H1 (cell line): ENCODE measurements at regions of chr5 and their contacts with region 1.

Region 1: GRCh38 chr5:14108170-14108996 is 34.8 kb upstream of the TRIO start:
- DNase-seq: peak; percentile 62 to 65
- H3K4me3 ChIP-seq: peak overlapping the region; percentile 18 to 53 (median 37); a peak in 7 of 8 replicates
- H3K27ac ChIP-seq: no peak overlapping the region
- H3K4me1 ChIP-seq: peaks cover 0 to 3% (median 1%) of the 10 kb centered on the region in 4 experiments; a peak in 3 of 7 replicates
- H3K27me3 ChIP-seq: no peaks in the 10 kb centered on the region; a peak in 2 of 7 replicates
- CTCF ChIP-seq: peak; percentile 70 to 75 (median 72)
- EP300 ChIP-seq: no peak
- POLR2A ChIP-seq: no peak; a peak in 1 of 3 replicates
- RAD21 ChIP-seq: peak; percentile 79 to 83

Region 2: DNA sequence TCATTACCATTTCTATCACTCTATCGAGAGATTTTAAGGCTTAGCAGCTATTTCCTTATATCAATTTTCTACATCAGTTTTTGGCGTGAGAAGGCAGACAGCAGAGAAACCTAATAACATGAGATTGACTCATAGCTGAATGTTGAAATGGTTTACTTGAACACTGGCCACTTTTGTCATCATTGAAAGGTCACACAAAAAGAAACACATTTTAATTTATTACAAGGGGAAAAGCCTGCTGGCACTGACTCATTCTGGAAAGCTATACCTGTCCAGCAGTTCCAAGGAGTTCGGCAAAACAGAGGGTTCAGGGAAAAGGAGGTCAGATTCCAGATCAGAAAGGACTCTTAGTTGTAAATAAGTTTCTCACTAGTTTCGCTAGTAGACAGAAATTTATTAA is 730.3 kb before region 1 on chr5:
- CTCF ChIA-PET with region 1: no interaction called
- POLR2A ChIA-PET with region 1: no interaction called
- DNase-seq: no peak
- H3K4me3 ChIP-seq: no peak overlapping the region
- H3K27ac ChIP-seq: no peak overlapping the region
- H3K4me1 ChIP-seq: no peaks in the 10 kb centered on the region
- H3K27me3 ChIP-seq: no peaks in the 10 kb centered on the region
- CTCF ChIP-seq: no peak
- EP300 ChIP-seq: no peak
- POLR2A ChIP-seq: no peak
- RAD21 ChIP-seq: no peak

Region 3: DNA sequence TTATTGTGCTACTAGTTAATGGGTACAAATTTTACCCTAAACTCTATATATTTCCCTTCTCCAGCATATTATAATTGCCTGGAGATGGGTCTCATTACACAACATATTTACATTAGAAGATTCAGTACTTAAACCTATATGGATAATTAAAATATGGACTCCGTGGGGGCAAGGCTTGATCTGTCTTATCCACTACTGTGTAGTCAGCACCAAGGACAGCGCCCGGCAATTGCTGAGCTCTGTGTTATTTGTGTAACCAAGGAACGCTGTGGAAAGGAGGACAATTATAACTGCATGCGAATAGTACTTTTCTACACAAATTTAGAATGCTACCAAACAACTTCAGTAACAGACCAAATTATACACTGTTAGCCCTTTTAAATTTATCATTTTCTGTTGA is 241.6 kb before region 1 on chr5:
- CTCF ChIA-PET with region 1: no interaction called
- POLR2A ChIA-PET with region 1: no interaction called
- DNase-seq: peak in 1 of 2 experiments; percentile 69
- H3K4me3 ChIP-seq: no peak overlapping the region
- H3K27ac ChIP-seq: no peak overlapping the region
- H3K4me1 ChIP-seq: no peaks in the 10 kb centered on the region
- H3K27me3 ChIP-seq: no peaks in the 10 kb centered on the region
- CTCF ChIP-seq: no peak
- EP300 ChIP-seq: no peak
- POLR2A ChIP-seq: no peak
- RAD21 ChIP-seq: no peak

Region 4: GRCh38 chr5:14118527-14119320 is 10.3 kb after region 1 on chr5:
- CTCF ChIA-PET with region 1: interaction called, 57 read pairs
- POLR2A ChIA-PET with region 1: no interaction called
- DNase-seq: no peak
- H3K4me3 ChIP-seq: no peak overlapping the region
- H3K27ac ChIP-seq: no peak overlapping the region
- H3K4me1 ChIP-seq: peaks cover 0 to 16% (median 13%) of the 10 kb centered on the region in 4 experiments; a peak in 6 of 7 replicates
- H3K27me3 ChIP-seq: no peaks in the 10 kb centered on the region
- CTCF ChIP-seq: no peak
- EP300 ChIP-seq: no peak
- POLR2A ChIP-seq: no peak
- RAD21 ChIP-seq: no peak

Region 5: GRCh38 chr5:14142827-14143548 is 34.6 kb after region 1 on chr5 and contains the start of gene TRIO:
- CTCF ChIA-PET with region 1: interaction called, 14 read pairs
- POLR2A ChIA-PET with region 1: no interaction called
- DNase-seq: peak; percentile 85 to 99
- H3K4me3 ChIP-seq: peak within 1 kb of the TSS; percentile 88 to 98 (median 94)
- H3K27ac ChIP-seq: peak within 1 kb of the TSS; percentile 42; the same call in 1 of the 2 replicates
- H3K4me1 ChIP-seq: peaks cover 5 to 20% (median 10%) of the 10 kb centered on the region in 4 experiments; a peak in 6 of 7 replicates
- H3K27me3 ChIP-seq: peaks cover 0 to 2% (median 0%) of the 10 kb centered on the region in 4 experiments; a peak in 1 of 7 replicates
- CTCF ChIP-seq: peak; percentile 46 to 70 (median 54)
- EP300 ChIP-seq: no peak
- POLR2A ChIP-seq: peak; percentile 37 to 63
- RAD21 ChIP-seq: peak; percentile 42 to 57; a peak in 3 of 4 replicates
- total RNA-seq, gene TRIO: 69.1 and 70.4 TPM in 2 replicates

Region 6: GRCh38 chr5:14175381-14175780 is 67.0 kb after region 1 on chr5:
- CTCF ChIA-PET with region 1: no interaction called
- POLR2A ChIA-PET with region 1: no interaction called
- DNase-seq: no peak
- H3K4me3 ChIP-seq: no peak overlapping the region
- H3K27ac ChIP-seq: no peak overlapping the region
- H3K4me1 ChIP-seq: peaks cover 15 to 31% (median 24%) of the 10 kb centered on the region in 4 experiments
- H3K27me3 ChIP-seq: no peaks in the 10 kb centered on the region
- CTCF ChIP-seq: no peak
- EP300 ChIP-seq: no peak
- POLR2A ChIP-seq: no peak
- RAD21 ChIP-seq: no peak